MCF 10A (cell line): ENCODE measurements at regions of chr1 and their contacts with region 1.

Region 1: GRCh38 chr1:232704694-232705680 is 75.1 kb upstream of the SIPA1L2 start:
- DNase-seq: peak; percentile 98
- H3K4me3 Mint-ChIP-seq: peak overlapping the region; percentile 30
- H3K27ac Mint-ChIP-seq: peak overlapping the region; percentile 76
- H3K4me1 Mint-ChIP-seq: peaks cover 48% of the 10 kb centered on the region
- H3K27me3 Mint-ChIP-seq: no peaks in the 10 kb centered on the region
- CTCF ChIP-seq: no peak

Region 2: DNA sequence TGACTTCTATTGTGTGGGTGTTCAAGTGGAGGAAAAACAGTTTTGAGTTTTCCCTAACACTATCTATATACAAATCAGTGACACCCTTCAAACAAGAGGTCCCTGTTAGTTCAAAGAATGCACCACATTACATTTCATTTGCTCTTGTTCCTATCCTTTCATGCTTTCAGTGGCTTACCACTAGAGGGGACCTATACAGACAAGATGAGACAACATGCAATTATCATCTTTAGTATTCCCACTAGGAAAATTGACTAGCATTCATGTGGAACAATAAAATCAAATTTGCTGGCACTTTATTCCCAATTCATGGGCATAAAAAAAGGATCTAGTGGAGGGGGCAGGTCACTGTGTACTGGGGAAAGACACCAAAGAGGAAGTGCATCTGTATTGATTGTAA is 61.7 kb before region 1 on chr1:
- CTCF ChIA-PET with region 1: interaction called, 8 read pairs
- POLR2A ChIA-PET with region 1: interaction called, 14 read pairs
- intact Hi-C with region 1: no loop called
- DNase-seq: no peak
- H3K4me3 Mint-ChIP-seq: no peak overlapping the region
- H3K27ac Mint-ChIP-seq: no peak overlapping the region
- H3K4me1 Mint-ChIP-seq: no peaks in the 10 kb centered on the region
- H3K27me3 Mint-ChIP-seq: no peaks in the 10 kb centered on the region
- CTCF ChIP-seq: no peak

Region 3: DNA sequence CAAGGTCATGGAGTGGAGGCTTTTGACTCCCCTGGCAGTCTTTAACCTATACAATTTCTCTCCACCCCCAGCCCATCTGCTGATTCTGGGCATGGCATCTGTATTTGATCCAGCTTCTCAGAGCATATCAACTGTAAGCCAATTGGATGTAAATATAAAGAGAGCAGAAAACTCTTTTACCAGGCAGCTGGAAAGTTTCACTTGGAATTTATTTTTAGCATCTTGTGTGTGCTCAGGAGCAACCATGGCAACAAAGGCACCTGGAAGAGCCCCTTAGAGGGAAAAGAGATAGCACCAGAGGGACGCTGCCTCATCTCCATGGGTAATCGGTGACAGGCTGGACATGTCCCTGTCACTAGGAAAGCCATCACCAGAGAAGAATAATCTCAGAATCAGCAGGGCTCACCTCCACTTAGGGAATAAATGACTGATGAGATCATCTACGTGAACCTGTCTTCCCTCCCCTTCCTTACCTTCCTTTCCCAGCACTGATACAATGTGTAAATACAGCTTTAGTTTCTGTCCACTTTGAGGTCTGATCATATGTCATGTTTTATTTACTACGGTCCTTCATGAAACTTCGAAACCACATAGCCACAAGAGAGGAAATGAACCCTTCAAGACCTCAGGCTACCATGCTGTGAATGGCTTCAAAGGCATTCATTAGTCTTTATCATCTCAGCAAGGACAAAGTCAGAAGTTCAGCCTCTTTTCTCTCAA is 49.8 kb before region 1 on chr1:
- CTCF ChIA-PET with region 1: interaction called, 3 read pairs
- POLR2A ChIA-PET with region 1: interaction called, 14 read pairs
- intact Hi-C with region 1: no loop called
- DNase-seq: no peak
- H3K4me3 Mint-ChIP-seq: no peak overlapping the region
- H3K27ac Mint-ChIP-seq: no peak overlapping the region
- H3K4me1 Mint-ChIP-seq: peaks cover 13% of the 10 kb centered on the region
- H3K27me3 Mint-ChIP-seq: no peaks in the 10 kb centered on the region
- CTCF ChIP-seq: no peak

Region 4: GRCh38 chr1:232684363-232685105 is 20.5 kb before region 1 on chr1:
- CTCF ChIA-PET with region 1: no interaction called
- POLR2A ChIA-PET with region 1: interaction called, 22 read pairs
- intact Hi-C with region 1: no loop called
- DNase-seq: peak; percentile 59
- H3K4me3 Mint-ChIP-seq: no peak overlapping the region
- H3K27ac Mint-ChIP-seq: no peak overlapping the region
- H3K4me1 Mint-ChIP-seq: peaks cover 9% of the 10 kb centered on the region
- H3K27me3 Mint-ChIP-seq: no peaks in the 10 kb centered on the region
- CTCF ChIP-seq: no peak

Region 5: GRCh38 chr1:232767305-232768074 is 62.5 kb after region 1 on chr1:
- CTCF ChIA-PET with region 1: interaction called, 5 read pairs
- POLR2A ChIA-PET with region 1: interaction called, 98 read pairs
- intact Hi-C with region 1: loop called (anchors 1 kb)
- DNase-seq: peak; percentile 100
- H3K4me3 Mint-ChIP-seq: peak overlapping the region; percentile 11
- H3K27ac Mint-ChIP-seq: peak overlapping the region; percentile 43
- H3K4me1 Mint-ChIP-seq: peaks cover 19% of the 10 kb centered on the region
- H3K27me3 Mint-ChIP-seq: no peaks in the 10 kb centered on the region
- CTCF ChIP-seq: no peak

Region 6: DNA sequence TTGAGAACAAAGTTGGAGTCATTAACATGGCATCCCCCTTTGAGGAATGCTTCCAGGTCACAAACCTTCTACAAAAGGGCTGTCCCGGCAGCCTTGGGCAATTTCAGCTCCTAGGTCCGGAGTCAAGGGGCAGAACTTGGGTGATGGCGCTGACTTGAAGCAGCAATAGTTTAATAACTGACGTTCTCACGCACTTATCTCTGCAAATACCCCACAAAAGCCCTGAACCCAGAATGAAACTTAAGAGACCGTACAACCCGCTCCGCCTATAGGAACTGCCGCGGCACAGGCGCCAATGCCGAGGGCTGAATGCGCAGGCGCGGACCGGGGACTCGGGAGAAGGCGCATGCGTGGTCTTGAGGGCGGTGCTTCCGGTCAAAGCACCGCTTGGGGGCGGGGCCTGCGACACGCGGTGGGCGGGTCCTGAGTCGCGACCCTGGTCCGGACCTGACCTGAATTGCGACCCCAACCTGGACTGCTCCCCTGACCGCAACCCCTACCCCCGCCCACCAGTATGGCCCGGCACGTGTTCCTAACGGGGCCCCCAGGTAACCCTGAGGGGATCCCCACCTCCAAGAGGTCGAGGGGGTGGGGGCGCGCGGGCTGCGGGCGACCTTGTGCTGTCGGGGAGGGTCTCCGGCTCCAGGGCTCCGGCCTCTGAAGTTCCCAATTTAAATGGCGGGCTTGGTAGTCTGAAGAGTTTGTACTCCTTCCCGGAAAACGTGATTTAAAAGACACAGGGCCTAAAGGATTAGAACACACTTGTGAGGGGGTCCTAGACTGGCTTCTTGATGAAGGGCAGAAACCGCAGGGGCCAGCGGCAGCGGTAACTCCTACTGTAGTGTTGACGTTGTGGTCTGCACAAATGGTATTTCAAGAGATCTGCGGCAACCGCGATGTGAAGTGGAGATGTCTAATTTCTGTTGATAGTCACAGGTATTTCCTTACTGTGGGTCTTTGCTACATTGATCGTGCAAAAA is 245.5 kb after region 1 on chr1 and contains the start of gene NTPCR:
- CTCF ChIA-PET with region 1: interaction called, 8 read pairs
- POLR2A ChIA-PET with region 1: interaction called, 21 read pairs
- intact Hi-C with region 1: loop called (anchors 2 kb)
- DNase-seq: peak; percentile 98
- H3K4me3 Mint-ChIP-seq: peak within 1 kb of the TSS; percentile 89
- H3K27ac Mint-ChIP-seq: peak within 1 kb of the TSS; percentile 84
- H3K4me1 Mint-ChIP-seq: peaks cover 37% of the 10 kb centered on the region
- H3K27me3 Mint-ChIP-seq: no peaks in the 10 kb centered on the region
- CTCF ChIP-seq: peak; percentile 20
- total RNA-seq, gene NTPCR: 116 and 129 TPM in 2 replicates